GM12878 (cell line): ENCODE measurements at regions of chr14 and their contacts with region 1.

Region 1: DNA sequence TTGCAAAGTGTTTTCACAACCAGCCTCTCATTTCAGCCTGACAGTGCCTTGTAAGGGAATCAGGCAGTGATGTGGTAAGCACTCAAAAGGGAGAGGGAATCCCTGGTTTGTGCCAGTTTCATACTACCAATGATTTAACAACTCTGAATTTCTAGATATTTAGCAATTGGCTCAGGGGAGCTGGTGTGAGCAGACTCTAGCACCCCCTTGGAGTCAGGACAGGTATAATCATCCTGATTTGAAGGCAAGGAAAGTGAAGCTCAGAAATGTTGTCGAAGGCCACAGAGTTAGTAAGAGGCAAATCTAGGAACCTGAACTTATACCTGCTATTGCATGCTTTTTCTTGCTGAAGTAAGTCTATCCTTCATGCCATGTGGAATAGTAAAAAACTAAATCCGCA is 63.1 kb upstream of the DACT1 start:
- DNase-seq: no peak
- ATAC-seq: peak; percentile 52
- H3K4me3 ChIP-seq: no peak overlapping the region
- H3K27ac ChIP-seq: no peak overlapping the region
- H3K4me1 ChIP-seq: no peaks in the 10 kb centered on the region
- H3K27me3 ChIP-seq: no peaks in the 10 kb centered on the region
- CTCF ChIP-seq: peak in 2 of 3 experiments; percentile 14 to 18; a peak in 2 of 6 replicates
- EP300 ChIP-seq: no peak
- POLR2A ChIP-seq: no peak
- RAD21 ChIP-seq: no peak

Region 2: DNA sequence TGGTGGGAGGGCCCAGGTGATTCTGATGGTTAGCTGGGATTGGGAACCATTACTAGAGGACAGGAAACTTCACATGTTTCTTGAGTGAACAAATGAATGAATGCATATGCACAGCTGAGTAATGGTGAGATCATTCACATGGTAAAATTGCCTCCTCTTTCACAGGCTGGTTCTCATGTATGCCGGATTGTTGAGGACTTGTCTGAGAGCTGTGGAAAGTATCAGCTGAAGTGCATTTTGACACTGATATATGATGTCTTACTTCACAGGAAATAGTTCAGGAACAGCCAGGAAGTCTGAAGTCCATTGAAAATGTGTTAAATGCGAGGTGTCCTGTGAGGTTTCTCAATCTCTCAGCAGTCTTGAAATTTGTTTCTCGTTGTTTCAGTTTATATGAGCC is 14.4 kb before region 1 on chr14:
- CTCF ChIA-PET with region 1: interaction called, 3 read pairs
- POLR2A ChIA-PET with region 1: no interaction called
- RAD21 ChIA-PET with region 1: interaction called, 7 read pairs
- SMC1A ChIA-PET with region 1: interaction called, 16 read pairs
- in situ Hi-C with region 1: no loop called
- intact Hi-C with region 1: no loop called
- DNase-seq: no peak
- ATAC-seq: peak; percentile 32; the same call in 2 of the 3 replicates
- H3K4me3 ChIP-seq: no peak overlapping the region
- H3K27ac ChIP-seq: no peak overlapping the region
- H3K4me1 ChIP-seq: no peaks in the 10 kb centered on the region
- H3K27me3 ChIP-seq: no peaks in the 10 kb centered on the region
- CTCF ChIP-seq: no peak
- EP300 ChIP-seq: no peak
- POLR2A ChIP-seq: no peak
- RAD21 ChIP-seq: no peak